Kidney (tissue), 22 donors: ENCODE measurements at regions of chr6 and their contacts with region 1.

Region 1: GRCh38 chr6:140052756-140053729 is 678.6 kb upstream of the CITED2 start:
- DNase-seq: peak in 1 of 5 donors; percentile 24
- H3K4me3 ChIP-seq: no peak overlapping the region
- H3K27ac ChIP-seq: no peak overlapping the region
- H3K4me1 ChIP-seq: no peaks in the 10 kb centered on the region
- H3K27me3 ChIP-seq: no peaks in the 10 kb centered on the region
- CTCF ChIP-seq: peak; percentile 26

Region 2: GRCh38 chr6:139375232-139376016 is 677.6 kb before region 1 on chr6:
- intact Hi-C with region 1: loop called (anchors 10 kb)
- DNase-seq: peak; percentile 96 to 98 (median 97)
- H3K4me3 ChIP-seq: peak overlapping the region; percentile 71 to 97 (median 86)
- H3K27ac ChIP-seq: peak overlapping the region; percentile 98 to 99
- H3K4me1 ChIP-seq: peaks cover 0 to 2% (median 0%) of the 10 kb centered on the region in 3 donors
- H3K27me3 ChIP-seq: no peaks in the 10 kb centered on the region
- CTCF ChIP-seq: no peak